Endothelial cell of umbilical vein (primary cell): ENCODE measurements at regions of chr12 and their contacts with region 1.

Region 1: DNA sequence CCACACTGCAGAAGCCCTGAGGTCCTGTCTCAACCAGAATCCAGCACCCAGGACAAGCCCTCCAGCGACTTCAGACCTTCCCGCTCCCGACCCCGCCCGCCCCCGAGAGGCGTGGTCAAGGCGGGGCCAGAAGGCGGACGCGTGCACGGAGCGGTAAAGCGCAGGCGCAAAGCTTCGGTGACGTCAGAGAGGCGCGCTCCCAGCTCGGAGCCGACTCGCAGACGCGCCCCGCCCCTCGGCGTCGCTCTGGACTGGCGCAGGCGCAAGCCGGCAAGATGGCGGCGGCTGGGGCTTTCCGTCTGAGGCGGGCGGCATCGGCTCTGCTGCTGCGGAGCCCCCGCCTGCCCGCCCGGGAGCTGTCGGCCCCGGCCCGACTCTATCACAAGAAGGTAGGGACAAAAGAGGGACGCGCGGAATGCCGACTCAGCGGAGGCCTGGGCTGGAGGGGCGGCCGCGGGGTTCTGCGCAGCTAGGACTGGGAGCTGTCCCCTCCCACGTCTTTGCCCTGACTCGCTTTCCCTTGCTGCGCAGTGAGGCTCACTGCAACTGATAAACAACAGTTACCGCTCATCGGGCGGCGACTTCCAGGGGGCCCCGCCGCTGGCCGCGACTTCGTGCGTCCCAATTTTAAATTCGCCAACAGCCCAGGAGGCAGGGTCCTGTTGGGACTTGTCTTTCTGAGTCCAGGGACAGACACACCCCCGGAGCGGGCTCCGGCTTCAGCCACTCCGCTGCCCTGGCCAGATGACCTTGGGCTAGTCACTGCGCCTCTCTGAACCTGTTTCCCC is at the start of gene ISCU:
- DNase-seq: peak; percentile 96
- H3K4me3 ChIP-seq: peak within 1 kb of the TSS; percentile 78 to 95 (median 86)
- H3K27ac ChIP-seq: peak within 1 kb of the TSS; percentile 83
- H3K4me1 ChIP-seq: peaks cover 34% of the 10 kb centered on the region
- H3K27me3 ChIP-seq: no peaks in the 10 kb centered on the region
- CTCF ChIP-seq: no peak
- POLR2A ChIP-seq: peak; percentile 94
- total RNA-seq, gene ISCU: 74.8 and 75.0 TPM in 2 replicates

Region 2: DNA sequence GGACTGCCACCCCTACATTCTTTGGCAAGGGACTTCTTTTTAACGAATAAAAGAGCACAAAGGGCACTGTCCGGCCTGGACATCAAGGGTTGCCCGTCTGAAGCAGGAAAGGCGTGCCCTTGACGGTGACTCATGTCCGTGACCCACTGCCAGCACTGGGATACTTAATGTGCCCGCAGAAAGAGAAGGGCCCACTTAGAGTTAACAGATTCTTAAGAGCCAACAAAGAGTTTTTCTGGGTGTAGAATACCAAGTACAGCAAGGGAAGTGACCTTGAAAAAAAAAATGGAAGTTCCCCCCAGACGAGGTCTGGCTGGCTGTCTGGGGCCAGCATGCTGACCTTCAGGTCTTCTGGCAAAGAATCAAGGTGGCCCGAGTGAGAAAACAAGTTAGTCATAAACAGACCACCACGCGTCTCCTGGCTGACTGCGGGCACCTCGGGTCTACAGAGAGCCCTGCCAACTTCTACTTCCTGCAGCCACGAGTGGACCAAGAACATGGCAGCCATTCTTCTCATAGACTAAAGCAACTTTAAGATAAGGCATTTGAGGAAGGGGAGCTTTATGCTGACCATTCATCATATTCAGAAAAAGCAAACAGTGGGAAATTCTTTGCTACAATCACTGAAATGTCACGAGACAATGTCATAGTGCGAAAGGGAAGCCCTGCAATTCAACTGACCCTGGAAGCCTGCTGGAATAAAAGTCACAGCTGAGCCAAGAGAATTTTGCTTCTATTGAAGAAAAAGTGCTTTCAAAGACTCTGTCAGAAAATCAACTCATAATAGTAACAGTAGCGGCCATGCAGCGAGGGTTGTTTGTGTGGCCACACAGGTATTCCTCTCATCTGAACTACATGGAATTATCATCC is 81.6 kb after region 1 on chr12:
- CTCF ChIA-PET with region 1: interaction called, 3 read pairs
- POLR2A ChIA-PET with region 1: no interaction called
- dilution Hi-C with region 1: no loop called
- intact Hi-C with region 1: loop called (anchors 1 kb)
- DNase-seq: peak; percentile 92
- H3K4me3 ChIP-seq: no peak overlapping the region
- H3K27ac ChIP-seq: peak overlapping the region; percentile 76
- H3K4me1 ChIP-seq: peaks cover 48% of the 10 kb centered on the region
- H3K27me3 ChIP-seq: no peaks in the 10 kb centered on the region
- CTCF ChIP-seq: no peak
- POLR2A ChIP-seq: no peak

Region 3: GRCh38 chr12:108731105-108731865 is 168.7 kb after region 1 on chr12 and contains the start of gene CORO1C:
- CTCF ChIA-PET with region 1: no interaction called
- POLR2A ChIA-PET with region 1: no interaction called
- dilution Hi-C with region 1: no loop called
- intact Hi-C with region 1: loop called (anchors 2 kb)
- DNase-seq: peak; percentile 99
- H3K4me3 ChIP-seq: peak within 1 kb of the TSS; percentile 57 to 91 (median 76)
- H3K27ac ChIP-seq: peak within 1 kb of the TSS; percentile 92
- H3K4me1 ChIP-seq: peaks cover 29% of the 10 kb centered on the region
- H3K27me3 ChIP-seq: no peaks in the 10 kb centered on the region
- CTCF ChIP-seq: peak; percentile 89 to 95
- POLR2A ChIP-seq: peak; percentile 93
- total RNA-seq, gene CORO1C: 212 and 240 TPM in 2 replicates

Region 4: DNA sequence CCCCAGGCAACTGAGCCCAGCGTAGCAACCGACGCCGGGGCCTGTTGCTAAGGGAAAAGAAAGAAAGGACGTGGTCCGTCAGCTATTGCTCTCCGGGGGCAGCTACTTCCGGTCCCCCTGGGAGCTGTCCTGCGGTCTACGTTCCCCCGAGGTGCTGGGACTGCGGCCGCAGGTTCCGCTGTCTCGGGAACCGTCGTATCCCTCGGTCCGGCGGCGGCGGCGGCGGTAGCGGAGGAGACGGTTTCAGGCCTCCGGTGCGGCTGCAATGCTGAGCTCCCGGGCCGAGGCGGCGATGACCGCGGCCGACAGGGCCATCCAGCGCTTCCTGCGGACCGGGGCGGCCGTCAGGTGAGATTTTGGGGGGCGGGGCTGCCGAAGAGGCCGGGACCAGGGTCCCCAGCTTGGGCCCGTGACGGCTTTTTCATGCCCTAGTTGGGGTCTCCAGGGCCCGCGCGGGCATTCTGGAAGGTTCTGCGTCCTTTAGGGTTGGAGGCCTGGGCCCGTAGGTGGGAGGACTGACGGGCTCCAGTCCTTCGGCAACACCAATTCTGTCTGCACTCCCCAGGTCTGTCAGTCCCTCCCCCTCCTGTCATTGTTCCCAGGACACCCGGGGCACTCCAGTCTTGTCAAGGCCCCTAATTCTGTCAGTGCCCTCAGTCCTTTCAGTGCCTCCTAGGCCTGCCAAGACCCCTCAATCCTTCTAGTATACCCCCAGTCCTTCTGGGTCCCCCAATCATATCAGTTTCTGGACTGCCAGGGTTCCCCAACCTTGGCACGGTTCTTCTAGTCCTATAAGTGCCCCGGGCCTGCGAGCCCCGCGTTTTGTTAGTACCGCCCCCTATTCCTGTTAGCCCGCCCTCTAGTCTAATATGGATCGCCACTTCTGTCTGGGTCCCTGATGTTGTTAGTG is 490.1 kb after region 1 on chr12 and contains the start of gene USP30:
- CTCF ChIA-PET with region 1: interaction called, 3 read pairs
- POLR2A ChIA-PET with region 1: no interaction called
- dilution Hi-C with region 1: no loop called
- intact Hi-C with region 1: loop called (anchors 1 kb)
- DNase-seq: peak; percentile 77
- H3K4me3 ChIP-seq: peak within 1 kb of the TSS; percentile 72 to 93 (median 88)
- H3K27ac ChIP-seq: peak within 1 kb of the TSS; percentile 22
- H3K4me1 ChIP-seq: peaks cover 10% of the 10 kb centered on the region
- H3K27me3 ChIP-seq: no peaks in the 10 kb centered on the region
- CTCF ChIP-seq: no peak
- POLR2A ChIP-seq: peak; percentile 1
- total RNA-seq, gene USP30: 12.9 and 14.2 TPM in 2 replicates